H1 (cell line): ENCODE measurements at regions of chr2 and their contacts with region 1.

Region 1: GRCh38 chr2:9813312-9814133 is 29.8 kb upstream of the TAF1B start:
- DNase-seq: peak; percentile 66 to 95
- H3K4me3 ChIP-seq: no peak overlapping the region
- H3K27ac ChIP-seq: no peak overlapping the region
- H3K4me1 ChIP-seq: no peaks in the 10 kb centered on the region; a peak in 1 of 7 replicates
- H3K27me3 ChIP-seq: no peaks in the 10 kb centered on the region; a peak in 1 of 7 replicates
- CTCF ChIP-seq: peak; percentile 88 to 98 (median 96)
- EP300 ChIP-seq: no peak
- POLR2A ChIP-seq: no peak
- RAD21 ChIP-seq: peak; percentile 86 to 94

Region 2: GRCh38 chr2:9799665-9800632 is 13.6 kb before region 1 on chr2:
- CTCF ChIA-PET with region 1: interaction called, 118 read pairs
- POLR2A ChIA-PET with region 1: no interaction called
- DNase-seq: peak; percentile 83 to 99
- H3K4me3 ChIP-seq: no peak overlapping the region
- H3K27ac ChIP-seq: no peak overlapping the region
- H3K4me1 ChIP-seq: peaks cover 0 to 8% (median 2%) of the 10 kb centered on the region in 4 experiments; a peak in 4 of 7 replicates
- H3K27me3 ChIP-seq: no peaks in the 10 kb centered on the region
- CTCF ChIP-seq: peak; percentile 99 to 100 (median 99)
- EP300 ChIP-seq: no peak
- POLR2A ChIP-seq: no peak
- RAD21 ChIP-seq: peak; percentile 91 to 94

Region 3: GRCh38 chr2:9830690-9831410 is 17.3 kb after region 1 on chr2:
- CTCF ChIA-PET with region 1: interaction called, 23 read pairs
- POLR2A ChIA-PET with region 1: interaction called, 3 read pairs
- DNase-seq: no peak
- H3K4me3 ChIP-seq: no peak overlapping the region
- H3K27ac ChIP-seq: no peak overlapping the region
- H3K4me1 ChIP-seq: peaks cover 0 to 5% (median 2%) of the 10 kb centered on the region in 4 experiments; a peak in 3 of 7 replicates
- H3K27me3 ChIP-seq: no peaks in the 10 kb centered on the region; a peak in 1 of 7 replicates
- CTCF ChIP-seq: no peak
- EP300 ChIP-seq: no peak
- POLR2A ChIP-seq: no peak
- RAD21 ChIP-seq: no peak

Region 4: DNA sequence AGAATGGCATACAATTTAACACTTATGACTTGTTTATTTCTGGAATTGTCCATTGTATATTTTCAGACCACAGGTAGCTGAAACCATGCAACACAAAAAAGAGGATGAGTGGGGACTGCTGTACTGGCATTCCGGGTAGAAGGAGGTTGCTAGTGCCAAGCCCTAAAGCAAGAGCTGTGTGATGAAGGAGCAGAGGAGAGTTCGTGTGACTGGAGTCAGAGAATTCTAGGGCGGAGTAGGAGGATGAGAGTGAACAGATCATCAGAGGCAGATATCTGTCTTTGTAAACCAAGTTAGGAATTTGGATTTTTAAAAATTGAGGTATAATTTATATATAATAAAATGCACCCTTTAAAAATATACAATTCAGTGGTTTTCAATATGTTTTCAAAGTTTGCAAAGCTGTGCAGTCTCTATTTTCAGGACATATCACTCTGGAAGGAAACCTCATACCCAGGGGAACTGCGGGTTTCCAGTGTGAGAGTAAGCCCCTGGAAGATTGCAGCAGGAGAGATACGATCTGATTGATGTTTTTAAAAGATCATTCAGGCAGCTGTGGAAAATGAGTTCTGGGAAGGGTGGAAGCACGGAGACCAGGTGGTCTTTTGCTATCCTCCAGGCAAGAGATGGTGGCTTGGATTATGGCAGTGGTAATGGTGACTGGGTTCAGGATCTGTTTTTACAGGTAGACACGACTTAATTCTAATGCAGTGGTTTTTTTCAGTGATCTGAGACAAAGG is 66.1 kb after region 1 on chr2:
- CTCF ChIA-PET with region 1: interaction called, 11 read pairs
- POLR2A ChIA-PET with region 1: no interaction called
- DNase-seq: no peak
- H3K4me3 ChIP-seq: no peak overlapping the region
- H3K27ac ChIP-seq: no peak overlapping the region
- H3K4me1 ChIP-seq: peaks cover 0 to 10% (median 4%) of the 10 kb centered on the region in 4 experiments; a peak in 6 of 7 replicates
- H3K27me3 ChIP-seq: no peaks in the 10 kb centered on the region
- CTCF ChIP-seq: no peak
- EP300 ChIP-seq: no peak
- POLR2A ChIP-seq: no peak
- RAD21 ChIP-seq: no peak

Region 5: DNA sequence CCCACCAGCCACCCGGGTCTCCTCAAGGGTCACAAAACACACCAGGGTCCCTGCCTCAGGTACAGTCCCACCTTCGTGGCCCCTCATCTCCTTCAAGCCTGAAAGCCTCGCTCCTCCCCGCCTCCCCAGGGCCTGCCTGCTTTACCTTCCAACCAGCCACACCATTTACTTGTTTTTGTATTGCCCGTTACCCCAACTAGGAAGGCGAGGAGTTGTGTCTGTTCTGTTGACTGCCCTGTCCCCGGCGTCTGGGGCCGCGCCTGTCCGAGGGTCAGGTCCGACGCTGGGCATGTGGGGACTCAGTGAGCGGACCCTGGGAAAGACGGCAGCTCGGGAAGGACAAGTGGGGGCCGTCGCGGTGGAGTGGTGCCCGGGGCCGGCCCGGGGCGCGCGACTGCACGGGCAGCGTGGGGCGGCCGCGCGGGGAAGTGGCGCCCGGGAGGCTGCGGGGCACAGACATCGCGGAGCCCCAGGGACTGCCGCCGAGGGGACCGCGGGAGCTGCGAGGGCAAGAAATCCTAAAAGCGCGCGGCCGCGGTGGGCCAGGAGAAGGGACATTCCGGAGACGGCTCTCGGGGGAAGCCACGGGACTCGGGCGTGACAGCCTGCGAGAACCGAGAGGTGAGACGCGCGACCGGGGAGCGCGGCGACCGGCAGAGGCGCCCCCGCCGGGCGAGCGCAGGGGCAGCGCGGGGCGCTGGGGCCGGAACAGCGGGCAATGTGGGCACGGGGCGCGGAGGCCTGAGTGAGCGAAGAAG is 137.2 kb after region 1 on chr2:
- CTCF ChIA-PET with region 1: interaction called, 20 read pairs
- POLR2A ChIA-PET with region 1: interaction called, 3 read pairs
- DNase-seq: peak in 1 of 2 experiments; percentile 65
- H3K4me3 ChIP-seq: peak overlapping the region; percentile 54 to 81 (median 66)
- H3K27ac ChIP-seq: no peak overlapping the region
- H3K4me1 ChIP-seq: no peaks in the 10 kb centered on the region
- H3K27me3 ChIP-seq: peaks cover 8 to 36% (median 31%) of the 10 kb centered on the region in 4 experiments
- CTCF ChIP-seq: no peak
- EP300 ChIP-seq: no peak
- POLR2A ChIP-seq: no peak
- RAD21 ChIP-seq: no peak

Region 6: GRCh38 chr2:9984217-9984739 is 170.8 kb after region 1 on chr2:
- CTCF ChIA-PET with region 1: interaction called, 12 read pairs
- POLR2A ChIA-PET with region 1: no interaction called
- DNase-seq: no peak
- H3K4me3 ChIP-seq: no peak overlapping the region
- H3K27ac ChIP-seq: no peak overlapping the region
- H3K4me1 ChIP-seq: no peaks in the 10 kb centered on the region
- H3K27me3 ChIP-seq: no peaks in the 10 kb centered on the region; a peak in 1 of 7 replicates
- CTCF ChIP-seq: peak in 2 of 3 experiments; percentile 45 to 59; a peak in 3 of 4 replicates
- EP300 ChIP-seq: no peak
- POLR2A ChIP-seq: no peak
- RAD21 ChIP-seq: peak; percentile 47 to 51

Region 7: DNA sequence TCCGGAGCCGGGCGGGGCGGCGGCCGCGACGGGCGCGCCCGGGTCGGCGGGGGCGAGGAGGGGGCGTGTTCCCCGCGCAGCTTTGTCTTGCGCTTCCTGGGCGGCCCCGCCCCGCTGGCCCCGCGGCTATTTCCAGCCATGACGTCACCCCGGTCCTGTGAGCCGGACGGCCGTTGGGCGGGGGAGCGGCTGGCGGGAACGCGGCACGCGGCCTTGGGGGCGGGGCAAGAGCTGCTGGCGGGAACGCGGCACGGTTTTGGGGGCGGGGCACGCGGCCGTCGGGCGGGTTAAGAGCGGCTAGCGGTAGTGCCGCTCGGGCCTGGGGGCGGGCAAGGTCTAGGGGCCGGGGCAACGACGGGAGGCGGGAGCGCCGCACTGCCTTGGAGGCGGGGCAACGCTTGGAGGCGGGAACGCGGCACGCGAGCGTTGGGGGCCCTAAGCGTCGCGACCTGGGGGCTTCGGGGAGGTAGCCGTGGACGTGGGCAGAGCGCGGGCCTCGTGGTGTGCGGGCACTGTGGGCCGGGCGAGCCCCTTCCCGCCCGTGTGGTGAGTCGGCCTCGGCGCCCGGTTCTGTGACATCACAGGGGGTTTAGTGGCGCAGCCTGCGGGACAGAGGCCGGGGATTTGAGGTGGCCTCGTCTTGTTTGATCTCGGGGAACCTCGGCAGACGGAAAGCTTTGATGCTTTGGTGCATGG is 230.5 kb after region 1 on chr2:
- CTCF ChIA-PET with region 1: interaction called, 51 read pairs
- POLR2A ChIA-PET with region 1: no interaction called
- DNase-seq: peak in 1 of 2 experiments; percentile 89
- H3K4me3 ChIP-seq: peak overlapping the region in 2 of 4 experiments; percentile 61; a peak in 4 of 8 replicates
- H3K27ac ChIP-seq: peak overlapping the region; percentile 58; the same call in 1 of the 2 replicates
- H3K4me1 ChIP-seq: peaks cover 0 to 5% (median 2%) of the 10 kb centered on the region in 4 experiments; a peak in 3 of 7 replicates
- H3K27me3 ChIP-seq: peaks cover 0 to 26% (median 18%) of the 10 kb centered on the region in 4 experiments; a peak in 6 of 7 replicates
- CTCF ChIP-seq: no peak
- EP300 ChIP-seq: no peak
- POLR2A ChIP-seq: no peak
- RAD21 ChIP-seq: no peak